ENCODE measurements at regions of chr18 and their contacts with region 1.

Region 1: DNA sequence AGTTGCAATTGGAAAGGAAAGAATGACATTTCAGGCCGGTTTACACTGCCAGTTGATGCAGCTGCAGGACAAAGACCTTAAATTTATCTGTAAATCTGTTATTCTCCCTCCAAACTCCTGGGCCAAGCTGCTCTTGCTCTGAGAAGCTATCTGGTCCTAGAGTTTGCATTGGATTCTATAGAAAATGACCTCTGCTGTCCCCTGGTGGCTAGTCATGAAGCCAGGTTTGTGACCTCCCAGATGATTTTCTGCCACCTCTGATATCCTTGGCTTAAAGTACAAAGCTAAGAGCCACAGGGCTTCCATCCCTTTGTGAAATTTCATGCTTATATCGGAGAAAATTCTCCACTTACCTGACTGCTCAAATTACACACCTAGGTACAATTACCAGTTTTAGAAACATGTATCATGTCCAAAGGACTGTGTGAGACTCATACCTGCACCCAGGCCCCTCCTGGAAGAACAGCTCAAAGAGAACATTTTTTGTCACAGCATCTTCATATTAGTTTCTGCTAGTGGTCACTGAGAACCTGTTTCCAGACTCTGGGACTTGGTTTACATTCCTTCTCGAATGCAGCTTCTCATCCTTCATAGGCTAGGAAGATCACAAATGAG is 28.9 kb upstream of the IER3IP1 start:
- DNase-seq: peak; percentile 78
- H3K4me3 Mint-ChIP-seq: no peak overlapping the region
- H3K27ac Mint-ChIP-seq: no peak overlapping the region
- H3K4me1 Mint-ChIP-seq: no peaks in the 10 kb centered on the region
- H3K27me3 Mint-ChIP-seq: peaks cover 42% of the 10 kb centered on the region

Region 2: GRCh38 chr18:47050468-47050867 is 154.5 kb before region 1 on chr18:
- intact Hi-C with region 1: loop called (anchors 1 kb)
- DNase-seq: peak; percentile 77
- H3K4me3 Mint-ChIP-seq: no peak overlapping the region
- H3K27ac Mint-ChIP-seq: no peak overlapping the region
- H3K4me1 Mint-ChIP-seq: no peaks in the 10 kb centered on the region
- H3K27me3 Mint-ChIP-seq: peaks cover 3% of the 10 kb centered on the region

Region 3: GRCh38 chr18:47100214-47100831 is 104.7 kb before region 1 on chr18:
- intact Hi-C with region 1: loop called (anchors 1 kb)
- DNase-seq: peak; percentile 89
- H3K4me3 Mint-ChIP-seq: no peak overlapping the region
- H3K27ac Mint-ChIP-seq: no peak overlapping the region
- H3K4me1 Mint-ChIP-seq: no peaks in the 10 kb centered on the region
- H3K27me3 Mint-ChIP-seq: no peaks in the 10 kb centered on the region

Region 4: GRCh38 chr18:47397671-47398319 is 192.8 kb after region 1 on chr18:
- intact Hi-C with region 1: no loop called
- DNase-seq: peak; percentile 56
- H3K4me3 Mint-ChIP-seq: no peak overlapping the region
- H3K27ac Mint-ChIP-seq: no peak overlapping the region
- H3K4me1 Mint-ChIP-seq: no peaks in the 10 kb centered on the region
- H3K27me3 Mint-ChIP-seq: no peaks in the 10 kb centered on the region